ENCODE measurements at regions of chr1 and their contacts with region 1.

Region 1: DNA sequence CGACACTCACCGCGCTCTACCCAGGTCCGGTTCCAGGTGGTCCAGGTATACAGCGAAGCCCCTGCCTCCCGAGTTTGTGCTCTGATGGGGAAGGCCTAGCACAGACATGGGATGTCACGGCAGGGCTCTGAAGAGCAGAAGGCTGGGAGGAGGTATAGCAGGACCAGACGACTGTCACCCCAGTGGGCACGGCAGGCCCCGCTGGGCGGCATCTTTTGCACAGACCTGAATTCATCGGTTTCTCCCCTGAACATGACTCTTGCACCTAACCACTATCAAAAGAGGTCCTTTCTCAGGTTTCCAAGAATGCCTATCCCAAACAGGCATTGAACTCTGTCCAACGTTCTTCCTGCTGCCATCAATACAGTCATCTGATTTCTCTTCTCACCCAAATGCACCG is 30.6 kb downstream of the ARHGEF16 start:
- DNase-seq: no peak
- ATAC-seq: no peak
- H3K4me3 ChIP-seq: no peak overlapping the region
- H3K27ac ChIP-seq: no peak overlapping the region
- H3K4me1 ChIP-seq: peaks cover 7% of the 10 kb centered on the region
- H3K27me3 ChIP-seq: no peaks in the 10 kb centered on the region
- CTCF ChIP-seq: no peak
- POLR2A ChIP-seq: no peak

Region 2: DNA sequence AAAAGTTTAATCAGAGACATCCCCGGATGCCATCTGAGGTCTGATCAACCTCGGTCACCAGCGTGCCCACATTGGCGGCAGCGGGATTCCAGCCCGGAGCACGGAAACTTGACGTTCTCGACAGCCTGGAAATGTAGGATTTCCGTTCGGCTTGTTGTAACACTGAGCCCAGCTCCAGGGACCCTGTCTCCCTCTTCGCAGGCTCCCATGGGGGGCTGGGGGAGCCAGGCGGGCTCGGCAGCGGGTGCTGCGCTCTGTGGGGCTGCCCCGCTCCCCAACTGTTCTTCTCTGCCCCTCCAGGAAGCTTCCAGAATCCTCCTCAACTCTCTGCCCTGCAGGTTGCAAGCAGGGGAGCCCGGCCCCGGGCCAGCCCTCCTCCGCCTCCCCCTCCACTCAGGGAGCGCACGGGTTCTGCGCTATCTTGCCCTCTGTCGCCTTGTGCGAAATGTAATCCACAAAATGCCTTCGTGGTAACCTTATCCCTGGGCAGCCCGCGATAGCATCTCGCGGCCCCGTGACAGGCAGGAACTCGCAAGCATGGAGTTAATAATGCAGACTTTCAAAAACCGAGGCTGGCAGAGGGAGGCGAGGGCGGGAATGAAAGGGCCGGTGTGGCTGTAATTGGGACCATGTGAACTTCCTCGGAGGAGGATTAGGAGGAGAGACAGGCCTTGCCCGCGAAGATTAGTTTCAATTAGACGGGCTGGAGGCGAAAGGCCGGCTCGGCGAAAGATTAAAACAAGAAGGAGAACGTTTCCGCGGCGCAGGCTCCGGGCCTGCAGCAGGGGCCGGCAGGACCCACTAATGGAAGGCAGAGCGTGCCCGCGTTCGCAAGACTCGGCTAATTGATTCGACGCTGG is 629.6 kb before region 1 on chr1:
- intact Hi-C with region 1: no loop called
- DNase-seq: no peak
- ATAC-seq: no peak
- H3K4me3 ChIP-seq: no peak overlapping the region
- H3K27ac ChIP-seq: no peak overlapping the region
- H3K4me1 ChIP-seq: no peaks in the 10 kb centered on the region
- H3K27me3 ChIP-seq: no peaks in the 10 kb centered on the region
- CTCF ChIP-seq: no peak
- POLR2A ChIP-seq: no peak

Region 3: DNA sequence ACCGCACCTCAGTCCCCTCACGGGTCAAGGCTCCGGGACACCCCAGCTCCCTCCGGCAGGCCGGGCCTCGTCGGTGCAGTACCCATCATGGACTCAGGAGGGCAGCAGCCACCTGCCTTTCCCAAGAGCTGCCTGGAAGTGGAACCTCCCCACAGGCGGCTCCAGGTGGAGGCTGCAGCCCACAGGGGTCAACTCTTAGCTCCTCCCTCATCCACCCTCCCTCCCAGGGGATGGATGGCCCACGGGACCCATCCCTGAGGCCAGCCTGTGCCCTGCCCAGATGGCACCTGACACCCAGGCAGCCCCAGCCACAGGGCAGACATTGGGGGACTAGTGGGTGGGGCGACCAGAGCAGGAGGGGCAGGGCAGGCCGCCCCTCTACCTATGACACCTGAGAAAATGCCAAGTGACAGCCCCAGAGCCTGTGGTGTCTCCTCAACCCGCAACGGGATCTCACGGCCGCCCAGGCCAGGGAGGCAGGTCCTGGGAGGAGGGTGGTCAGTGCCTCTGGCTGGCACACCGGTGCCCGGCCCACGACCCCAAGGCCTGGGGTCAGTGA is 31.7 kb before region 1 on chr1:
- intact Hi-C with region 1: loop called (anchors 5 kb)
- DNase-seq: peak; percentile 77 to 86 (median 84)
- ATAC-seq: peak; percentile 78
- H3K4me3 ChIP-seq: no peak overlapping the region
- H3K27ac ChIP-seq: peak overlapping the region in 3 of 4 donors; percentile 74 to 85 (median 82)
- H3K4me1 ChIP-seq: peaks cover 31% of the 10 kb centered on the region
- H3K27me3 ChIP-seq: no peaks in the 10 kb centered on the region
- CTCF ChIP-seq: peak; percentile 94 to 98 (median 95)
- POLR2A ChIP-seq: no peak

Measured in body of pancreas (tissue), 4 donors.